A549 (cell line): ENCODE measurements at regions of chr2 and their contacts with region 1.

Region 1: GRCh38 chr2:101151141-101151858 is at the start of gene TBC1D8:
- DNase-seq: peak; percentile 80 to 82
- ATAC-seq: peak; percentile 81 to 83
- H3K4me3 ChIP-seq: peak within 1 kb of the TSS; percentile 85
- H3K27ac ChIP-seq: peak within 1 kb of the TSS; percentile 92 to 98
- H3K4me1 ChIP-seq: peaks cover 42% of the 10 kb centered on the region
- CTCF ChIP-seq: no peak
- EP300 ChIP-seq: no peak
- POLR2A ChIP-seq: peak; percentile 81
- RAD21 ChIP-seq: peak in 1 of 2 experiments; percentile 18; a peak in 2 of 5 replicates
- polyA plus RNA-seq, gene TBC1D8: 107 and 119 TPM in 2 replicates

Region 2: DNA sequence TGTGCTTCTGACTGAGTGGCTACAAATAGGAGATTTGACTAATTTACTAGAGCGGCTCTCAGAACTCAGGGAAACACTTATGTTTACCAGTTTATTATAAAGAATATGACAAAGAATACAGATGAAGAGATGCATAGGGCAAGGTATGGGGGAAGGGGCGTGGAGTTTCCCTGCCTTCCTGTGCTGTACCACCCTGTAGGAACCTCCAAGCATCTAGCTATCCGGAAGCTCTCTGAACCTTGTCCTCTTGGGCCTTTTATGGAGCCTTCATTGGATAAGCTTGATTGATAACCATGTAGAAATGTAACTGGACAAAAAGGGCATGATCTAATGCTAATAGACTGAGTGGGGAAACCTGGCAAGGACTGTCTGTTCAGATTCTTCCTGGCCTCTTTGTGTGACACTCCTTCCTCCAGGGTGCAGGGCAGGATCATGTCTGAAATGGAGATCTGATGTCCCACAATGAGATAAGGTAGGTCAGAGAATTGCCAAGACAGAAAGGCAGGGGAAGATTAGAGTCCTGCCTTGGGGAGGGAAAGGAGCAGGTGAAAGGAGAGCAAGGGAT is 433.2 kb before region 1 on chr2:
- CTCF ChIA-PET with region 1: no interaction called
- POLR2A ChIA-PET with region 1: no interaction called
- DNase-seq: no peak
- ATAC-seq: no peak
- H3K4me3 ChIP-seq: no peak overlapping the region
- H3K27ac ChIP-seq: no peak overlapping the region
- H3K4me1 ChIP-seq: no peaks in the 10 kb centered on the region
- CTCF ChIP-seq: no peak
- EP300 ChIP-seq: no peak
- POLR2A ChIP-seq: no peak
- RAD21 ChIP-seq: no peak

Region 3: DNA sequence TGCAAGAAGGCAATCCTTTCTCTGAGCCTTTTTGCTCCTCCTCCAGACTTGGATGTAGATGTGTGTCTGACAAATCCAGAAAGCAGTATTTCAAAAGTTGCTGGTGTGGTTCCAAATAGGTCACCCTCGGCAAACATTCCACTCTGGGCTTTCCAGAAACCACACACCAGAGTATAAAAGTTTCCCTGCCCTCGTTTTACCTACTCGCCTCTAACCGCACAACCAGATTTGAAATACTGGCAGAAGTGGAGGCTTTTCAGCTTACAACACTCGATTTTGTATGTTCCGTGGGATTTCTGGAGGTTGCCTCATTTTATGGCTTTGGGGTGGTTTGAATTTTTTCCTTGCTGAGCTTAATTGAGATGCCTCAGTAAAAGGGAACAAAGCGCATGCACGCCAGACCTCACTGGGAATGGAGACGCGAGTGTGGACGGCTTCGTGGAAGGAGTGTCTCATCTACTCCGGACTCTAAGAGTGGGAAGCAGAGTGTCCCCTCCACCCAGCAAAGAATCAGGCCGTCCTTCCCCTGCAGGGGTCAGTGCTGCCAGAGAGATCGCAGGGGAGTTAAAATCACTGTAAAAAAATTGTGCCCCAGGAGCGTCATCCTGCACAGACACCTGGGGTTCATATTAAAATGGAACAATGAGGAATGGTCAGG is 193.2 kb before region 1 on chr2:
- CTCF ChIA-PET with region 1: no interaction called
- POLR2A ChIA-PET with region 1: no interaction called
- DNase-seq: no peak
- ATAC-seq: no peak
- H3K4me3 ChIP-seq: no peak overlapping the region
- H3K27ac ChIP-seq: no peak overlapping the region
- H3K4me1 ChIP-seq: peaks cover 9% of the 10 kb centered on the region
- CTCF ChIP-seq: no peak
- EP300 ChIP-seq: no peak
- POLR2A ChIP-seq: no peak
- RAD21 ChIP-seq: no peak

Region 4: GRCh38 chr2:101012706-101013181 is 138.6 kb before region 1 on chr2:
- CTCF ChIA-PET with region 1: interaction called, 136 read pairs
- POLR2A ChIA-PET with region 1: interaction called, 15 read pairs
- DNase-seq: peak in 1 of 2 experiments; percentile 52
- ATAC-seq: peak in 1 of 2 experiments; percentile 31; a peak in 1 of 6 replicates
- H3K4me3 ChIP-seq: no peak overlapping the region
- H3K27ac ChIP-seq: peak overlapping the region; percentile 5 to 46; a peak in 1 of 6 replicates
- H3K4me1 ChIP-seq: peaks cover 9% of the 10 kb centered on the region; the same call in 2 of the 3 replicates
- CTCF ChIP-seq: peak; percentile 88
- EP300 ChIP-seq: no peak
- POLR2A ChIP-seq: no peak
- RAD21 ChIP-seq: peak; percentile 87 to 92

Region 5: GRCh38 chr2:101036562-101037457 is 114.5 kb before region 1 on chr2:
- CTCF ChIA-PET with region 1: interaction called, 107 read pairs
- POLR2A ChIA-PET with region 1: interaction called, 6 read pairs
- DNase-seq: no peak
- ATAC-seq: 0 out of 6 replicates have a peak, but pooled peaks of 1 of the 2 experiments have one; percentile 13
- H3K4me3 ChIP-seq: no peak overlapping the region
- H3K27ac ChIP-seq: peak overlapping the region; percentile 58 to 80
- H3K4me1 ChIP-seq: peaks cover 27% of the 10 kb centered on the region; the same call in 2 of the 3 replicates
- CTCF ChIP-seq: peak; percentile 59
- EP300 ChIP-seq: no peak
- POLR2A ChIP-seq: no peak
- RAD21 ChIP-seq: peak; percentile 75 to 80

Region 6: GRCh38 chr2:101080211-101081068 is 70.9 kb before region 1 on chr2:
- CTCF ChIA-PET with region 1: interaction called, 14 read pairs
- POLR2A ChIA-PET with region 1: interaction called, 4 read pairs
- DNase-seq: peak; percentile 44 to 97
- ATAC-seq: peak; percentile 92 to 94
- H3K4me3 ChIP-seq: no peak overlapping the region
- H3K27ac ChIP-seq: peak overlapping the region; percentile 87 to 95
- H3K4me1 ChIP-seq: peaks cover 87% of the 10 kb centered on the region
- CTCF ChIP-seq: no peak
- EP300 ChIP-seq: peak; percentile 96
- POLR2A ChIP-seq: no peak
- RAD21 ChIP-seq: peak; percentile 38 to 62

Region 7: GRCh38 chr2:101197215-101197745 is 46.0 kb after region 1 on chr2:
- CTCF ChIA-PET with region 1: interaction called, 11 read pairs
- POLR2A ChIA-PET with region 1: no interaction called
- DNase-seq: peak in 1 of 2 experiments; percentile 32
- ATAC-seq: peak; percentile 73 to 81; a peak in 5 of 6 replicates
- H3K4me3 ChIP-seq: no peak overlapping the region
- H3K27ac ChIP-seq: no peak overlapping the region
- H3K4me1 ChIP-seq: peaks cover 17% of the 10 kb centered on the region
- CTCF ChIP-seq: peak; percentile 34; the same call in 1 of the 3 replicates
- EP300 ChIP-seq: no peak
- POLR2A ChIP-seq: no peak
- RAD21 ChIP-seq: peak; percentile 17 to 34; a peak in 1 of 5 replicates

Region 8: DNA sequence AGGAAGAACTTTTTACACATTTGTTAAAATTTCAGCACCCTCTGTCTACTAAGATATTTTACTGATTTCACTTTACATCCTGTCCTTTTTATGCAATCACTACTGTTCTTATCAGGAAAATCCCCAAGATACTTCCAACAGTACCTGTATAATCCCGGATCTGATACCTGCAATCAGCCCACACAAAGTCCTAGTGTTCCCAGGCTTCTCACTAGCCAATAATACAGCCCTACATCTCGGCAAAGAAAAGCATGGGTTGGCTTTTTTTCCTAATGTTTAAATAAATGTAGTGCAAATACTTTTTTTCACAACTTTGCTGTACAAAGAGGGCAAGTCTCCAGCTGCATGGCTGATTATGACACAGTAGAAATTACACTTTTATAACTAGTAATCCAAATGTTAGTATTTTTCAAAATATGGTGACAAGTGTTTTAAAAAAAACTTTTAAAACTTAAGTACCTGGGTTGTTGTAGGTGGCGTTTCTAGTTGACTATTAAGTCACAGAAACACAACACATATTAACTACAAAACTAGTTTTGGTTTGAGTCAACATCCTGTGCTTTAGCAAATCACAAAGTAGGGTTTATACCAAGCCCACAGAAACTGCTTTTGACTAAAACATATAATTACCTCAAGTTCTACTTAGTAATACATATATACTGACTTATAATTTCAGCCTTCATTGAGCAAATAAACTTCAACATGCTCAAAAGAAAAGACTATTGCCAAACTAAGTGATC is 120.9 kb after region 1 on chr2:
- CTCF ChIA-PET with region 1: no interaction called
- POLR2A ChIA-PET with region 1: no interaction called
- DNase-seq: no peak
- ATAC-seq: no peak
- H3K4me3 ChIP-seq: no peak overlapping the region
- H3K27ac ChIP-seq: no peak overlapping the region
- H3K4me1 ChIP-seq: peaks cover 5% of the 10 kb centered on the region
- CTCF ChIP-seq: no peak
- EP300 ChIP-seq: no peak
- POLR2A ChIP-seq: no peak
- RAD21 ChIP-seq: no peak

Region 9: GRCh38 chr2:101630224-101630949 is 479.1 kb after region 1 on chr2:
- CTCF ChIA-PET with region 1: no interaction called
- POLR2A ChIA-PET with region 1: no interaction called
- DNase-seq: peak in 1 of 2 experiments; percentile 11
- ATAC-seq: no peak; a peak in 1 of 6 replicates
- H3K4me3 ChIP-seq: no peak overlapping the region
- H3K27ac ChIP-seq: no peak overlapping the region
- H3K4me1 ChIP-seq: peaks cover 3% of the 10 kb centered on the region; the same call in 2 of the 3 replicates
- CTCF ChIP-seq: no peak
- EP300 ChIP-seq: no peak
- POLR2A ChIP-seq: no peak
- RAD21 ChIP-seq: no peak